B cell (primary cell): ENCODE measurements at regions of chr20 and their contacts with region 1.

Region 1: DNA sequence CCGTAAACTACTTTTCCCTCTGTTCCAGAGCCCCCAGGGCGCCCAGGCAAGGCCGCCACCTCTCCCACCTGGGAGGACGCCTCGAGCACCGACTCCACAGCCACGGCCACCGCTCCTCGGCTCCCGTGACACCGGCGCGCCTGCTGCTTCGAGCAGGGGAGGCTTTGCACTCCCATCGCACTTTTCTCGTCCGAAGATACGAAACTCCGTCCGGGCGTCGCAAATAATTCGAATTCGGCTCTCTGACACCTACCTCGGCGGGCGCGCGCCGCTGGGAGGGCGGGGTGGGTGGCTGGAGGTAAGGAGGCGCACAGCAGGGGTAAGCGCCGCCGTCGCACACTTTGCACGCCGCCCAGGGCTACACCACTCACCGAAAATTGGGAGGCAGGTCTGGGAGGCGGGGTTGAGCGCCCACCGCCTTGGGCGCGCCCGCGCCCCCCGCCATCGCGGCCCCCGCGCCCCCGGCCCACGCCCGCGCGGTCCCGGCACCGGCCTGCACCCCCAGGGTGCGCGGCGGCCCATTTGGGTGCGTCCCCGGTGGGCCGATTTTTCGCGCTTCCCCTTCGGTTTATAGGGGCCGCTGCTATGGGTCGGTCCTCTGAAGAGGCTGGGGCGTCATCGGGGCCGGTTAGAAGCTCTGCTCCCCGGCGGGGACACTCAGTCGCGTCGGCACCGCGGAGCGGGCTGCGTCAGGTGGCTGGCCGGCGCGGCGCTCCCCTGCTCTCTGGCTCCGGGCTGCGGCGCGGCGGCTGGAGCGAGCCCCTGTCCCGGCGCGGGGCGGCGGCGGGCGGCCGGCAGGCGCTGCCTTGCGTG is 36.2 kb downstream of the GNAS start:
- DNase-seq: peak; percentile 93
- ATAC-seq: peak; percentile 42
- H3K4me3 ChIP-seq: peak overlapping the region; percentile 26 to 90 (median 71)
- H3K4me3 Mint-ChIP-seq: peak overlapping the region; percentile 85
- H3K27ac ChIP-seq: peak overlapping the region; percentile 64 to 88
- H3K27ac Mint-ChIP-seq: peak overlapping the region; percentile 88
- H3K4me1 ChIP-seq: peaks cover 25 to 30% of the 10 kb centered on the region in 2 donors
- H3K4me1 Mint-ChIP-seq: peaks cover 29% of the 10 kb centered on the region
- H3K27me3 ChIP-seq: no peaks in the 10 kb centered on the region
- H3K27me3 Mint-ChIP-seq: no peaks in the 10 kb centered on the region
- CTCF ChIP-seq: no peak

Region 2: DNA sequence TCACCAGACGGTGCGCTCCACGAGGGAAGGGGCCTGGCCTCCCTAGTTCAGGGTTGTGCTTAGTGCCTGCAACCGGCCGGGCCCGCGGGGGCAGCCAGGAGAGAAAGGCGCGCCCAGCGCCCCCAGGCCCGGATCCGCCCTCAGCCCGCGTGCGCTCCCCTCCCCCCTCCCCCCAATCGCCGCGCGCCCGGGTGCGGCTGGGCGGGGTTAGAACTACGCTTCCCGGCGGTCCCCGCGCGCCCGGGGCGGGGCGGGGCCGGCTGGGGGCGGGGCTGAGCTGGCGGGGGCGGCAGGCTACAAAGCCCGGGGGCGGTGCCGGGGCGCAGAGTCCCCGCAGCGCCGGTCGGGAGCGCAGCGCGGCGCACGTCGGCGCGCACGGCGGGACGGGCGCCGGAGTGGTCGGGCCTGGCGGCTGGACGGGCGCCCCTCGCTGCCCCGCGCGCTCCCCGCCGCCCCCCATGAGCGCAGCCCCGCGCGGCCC is 1497.6 kb before region 1 on chr20 and contains the start of gene RBM38:
- CTCF ChIA-PET with region 1: no interaction called
- POLR2A ChIA-PET with region 1: no interaction called
- intact Hi-C with region 1: loop called (anchors 5 kb)
- DNase-seq: peak; percentile 91
- ATAC-seq: peak; percentile 66
- H3K4me3 ChIP-seq: peak within 1 kb of the TSS; percentile 82 to 99 (median 91)
- H3K4me3 Mint-ChIP-seq: peak within 1 kb of the TSS; percentile 98
- H3K27ac ChIP-seq: peak within 1 kb of the TSS; percentile 96 to 98
- H3K27ac Mint-ChIP-seq: peak within 1 kb of the TSS; percentile 98
- H3K4me1 ChIP-seq: peaks cover 54 to 66% of the 10 kb centered on the region in 2 donors
- H3K4me1 Mint-ChIP-seq: peaks cover 51% of the 10 kb centered on the region
- H3K27me3 ChIP-seq: no peaks in the 10 kb centered on the region
- H3K27me3 Mint-ChIP-seq: no peaks in the 10 kb centered on the region
- CTCF ChIP-seq: no peak
- total RNA-seq, gene RBM38: 224 and 225 TPM in 2 replicates

Region 3: GRCh38 chr20:58650776-58651558 is 237.8 kb before region 1 on chr20 and contains the start of gene STX16:
- CTCF ChIA-PET with region 1: no interaction called
- POLR2A ChIA-PET with region 1: no interaction called
- intact Hi-C with region 1: loop called (anchors 5 kb)
- DNase-seq: peak; percentile 91
- ATAC-seq: peak; percentile 74
- H3K4me3 ChIP-seq: peak within 1 kb of the TSS; percentile 87 to 99 (median 94)
- H3K4me3 Mint-ChIP-seq: peak within 1 kb of the TSS; percentile 100
- H3K27ac ChIP-seq: peak within 1 kb of the TSS; percentile 84 to 95
- H3K27ac Mint-ChIP-seq: peak within 1 kb of the TSS; percentile 97
- H3K4me1 ChIP-seq: peaks cover 14 to 20% of the 10 kb centered on the region in 2 donors
- H3K4me1 Mint-ChIP-seq: peaks cover 23% of the 10 kb centered on the region
- H3K27me3 ChIP-seq: peaks cover 0 to 3% (median 0%) of the 10 kb centered on the region in 4 experiments
- H3K27me3 Mint-ChIP-seq: no peaks in the 10 kb centered on the region
- CTCF ChIP-seq: peak; percentile 75
- total RNA-seq, gene STX16: 106 and 117 TPM in 2 replicates

Region 4: DNA sequence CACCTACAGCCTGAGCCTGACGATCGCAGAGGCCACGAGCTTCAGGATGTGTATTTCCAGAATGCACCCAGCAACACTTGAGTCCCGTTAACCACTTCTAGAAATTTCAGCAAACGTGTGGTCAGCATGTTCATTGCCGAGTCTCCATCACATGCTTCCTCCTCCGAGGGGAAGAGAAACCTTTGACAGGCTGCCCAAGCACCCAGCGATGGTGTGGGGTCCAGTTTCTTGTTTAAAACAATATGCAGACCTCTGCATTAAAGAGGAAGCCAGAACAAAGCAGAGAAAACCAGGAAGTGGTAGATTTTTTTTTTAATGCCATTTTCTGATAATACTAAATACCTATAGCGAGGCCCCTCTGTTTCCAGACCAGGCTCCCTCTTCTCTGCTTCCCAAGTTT is 110.0 kb before region 1 on chr20:
- CTCF ChIA-PET with region 1: no interaction called
- POLR2A ChIA-PET with region 1: no interaction called
- intact Hi-C with region 1: no loop called
- DNase-seq: no peak
- ATAC-seq: no peak
- H3K4me3 ChIP-seq: no peak overlapping the region
- H3K4me3 Mint-ChIP-seq: no peak overlapping the region
- H3K27ac ChIP-seq: no peak overlapping the region
- H3K27ac Mint-ChIP-seq: no peak overlapping the region
- H3K4me1 ChIP-seq: no peaks in the 10 kb centered on the region
- H3K4me1 Mint-ChIP-seq: no peaks in the 10 kb centered on the region
- H3K27me3 ChIP-seq: peaks cover 0 to 4% (median 0%) of the 10 kb centered on the region in 4 experiments
- H3K27me3 Mint-ChIP-seq: peaks cover 29% of the 10 kb centered on the region
- CTCF ChIP-seq: no peak

Region 5: GRCh38 chr20:58907399-58908137 is 18.8 kb after region 1 on chr20:
- CTCF ChIA-PET with region 1: interaction called, 4 read pairs
- POLR2A ChIA-PET with region 1: interaction called, 7 read pairs
- intact Hi-C with region 1: loop called (anchors 1 kb)
- DNase-seq: peak; percentile 95
- ATAC-seq: peak; percentile 84
- H3K4me3 ChIP-seq: peak overlapping the region; percentile 24 to 54 (median 33)
- H3K4me3 Mint-ChIP-seq: peak overlapping the region; percentile 85
- H3K27ac ChIP-seq: peak overlapping the region; percentile 94 to 97
- H3K27ac Mint-ChIP-seq: peak overlapping the region; percentile 94
- H3K4me1 ChIP-seq: peaks cover 24 to 37% of the 10 kb centered on the region in 2 donors
- H3K4me1 Mint-ChIP-seq: peaks cover 59% of the 10 kb centered on the region
- H3K27me3 ChIP-seq: no peaks in the 10 kb centered on the region
- H3K27me3 Mint-ChIP-seq: no peaks in the 10 kb centered on the region
- CTCF ChIP-seq: no peak

Region 6: DNA sequence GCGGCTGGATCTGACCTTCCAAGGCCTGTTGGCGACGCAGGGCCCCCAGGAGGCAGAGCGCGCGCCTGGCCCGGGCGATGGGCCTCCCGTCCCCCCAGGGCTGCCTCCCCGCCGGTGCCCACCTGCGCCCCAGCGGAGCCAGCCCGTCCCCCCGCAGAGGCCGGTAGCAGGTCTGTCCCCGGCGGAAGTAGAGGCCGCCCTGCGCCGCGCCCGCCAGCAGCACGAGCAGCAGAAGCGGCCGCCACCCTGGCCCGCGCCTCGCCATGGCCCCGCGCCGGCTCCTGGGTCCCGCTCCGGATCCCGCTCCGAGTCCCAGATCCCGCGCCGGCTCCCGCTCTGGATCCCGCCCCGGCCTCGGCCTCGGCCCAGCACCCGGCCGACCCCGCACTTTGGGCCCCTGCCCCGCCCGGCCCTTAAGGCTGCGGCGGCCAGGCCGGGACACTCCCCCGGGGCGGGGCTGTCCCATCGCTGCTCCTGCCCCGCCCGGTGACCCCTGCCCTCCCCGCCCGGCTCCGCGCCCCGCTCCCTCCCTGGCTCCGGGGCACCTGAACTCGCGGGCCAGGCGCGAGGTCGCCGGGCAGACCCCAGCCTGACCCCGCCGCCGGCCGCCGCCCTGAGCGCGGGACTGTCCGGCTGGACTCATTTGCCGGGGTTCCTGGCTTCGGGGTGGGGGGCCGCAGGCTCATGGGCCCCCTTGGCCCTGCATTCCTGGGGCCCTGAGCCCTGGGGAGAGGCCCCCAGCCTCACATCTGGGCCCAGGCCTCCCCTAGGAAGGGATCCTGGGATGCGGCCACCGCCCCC is 118.3 kb after region 1 on chr20 and contains the start of gene CTSZ:
- CTCF ChIA-PET with region 1: no interaction called
- POLR2A ChIA-PET with region 1: interaction called, 6 read pairs
- intact Hi-C with region 1: loop called (anchors 1 kb)
- DNase-seq: peak; percentile 60
- ATAC-seq: peak; percentile 23
- H3K4me3 ChIP-seq: peak within 1 kb of the TSS; percentile 79 to 91 (median 88)
- H3K4me3 Mint-ChIP-seq: peak within 1 kb of the TSS; percentile 98
- H3K27ac ChIP-seq: peak within 1 kb of the TSS; percentile 97
- H3K27ac Mint-ChIP-seq: peak within 1 kb of the TSS; percentile 99
- H3K4me1 ChIP-seq: peaks cover 45 to 65% of the 10 kb centered on the region in 2 donors
- H3K4me1 Mint-ChIP-seq: peaks cover 71% of the 10 kb centered on the region
- H3K27me3 ChIP-seq: no peaks in the 10 kb centered on the region
- H3K27me3 Mint-ChIP-seq: no peaks in the 10 kb centered on the region
- CTCF ChIP-seq: no peak
- total RNA-seq, gene CTSZ: 319 and 322 TPM in 2 replicates

Region 7: DNA sequence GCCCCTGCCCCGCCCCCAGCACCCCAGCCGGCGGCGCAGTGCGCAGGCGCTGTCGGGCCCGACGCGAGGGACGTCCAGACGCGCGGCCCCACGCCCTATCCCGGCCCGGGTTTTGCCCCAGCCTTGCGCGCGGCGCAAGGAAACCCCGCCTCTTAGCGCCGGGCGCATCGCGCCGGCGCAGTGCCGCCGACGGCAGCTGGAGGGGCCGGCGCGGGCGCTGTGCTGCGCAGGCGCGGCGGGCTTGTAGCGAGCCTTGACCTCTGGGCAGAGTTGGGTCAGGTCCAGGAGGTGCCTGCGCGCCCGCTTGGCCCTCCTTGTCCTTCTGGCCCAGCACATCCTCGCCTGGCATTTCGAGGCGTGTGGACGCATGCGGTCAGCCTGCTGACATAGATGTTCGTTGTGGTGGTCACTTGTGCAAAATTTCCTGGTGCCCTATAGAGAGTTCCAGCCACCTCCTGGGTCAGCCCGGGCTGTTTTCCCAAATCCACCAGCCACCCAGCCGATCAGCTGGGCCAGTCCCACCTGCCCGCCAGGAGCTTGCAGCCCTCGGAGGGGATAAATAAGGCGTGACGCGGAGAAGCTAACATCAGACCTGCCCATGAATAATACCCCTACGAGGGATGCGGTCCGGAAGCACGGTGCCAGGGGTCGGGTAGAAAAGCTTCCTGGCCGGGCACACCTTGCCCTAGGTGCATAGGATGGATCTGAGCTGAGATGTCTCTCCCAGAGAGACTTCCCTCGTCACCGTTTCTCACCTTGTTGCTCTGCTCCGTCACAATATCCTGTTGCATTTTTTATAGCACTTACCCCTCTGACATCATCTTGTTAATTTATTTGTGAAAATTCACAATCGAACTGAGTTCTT is 154.3 kb after region 1 on chr20:
- CTCF ChIA-PET with region 1: no interaction called
- POLR2A ChIA-PET with region 1: interaction called, 4 read pairs
- intact Hi-C with region 1: loop called (anchors 1 kb)
- DNase-seq: peak; percentile 96
- ATAC-seq: peak; percentile 98
- H3K4me3 ChIP-seq: peak overlapping the region in 4 of 5 experiments; percentile 80 to 97 (median 86)
- H3K4me3 Mint-ChIP-seq: peak overlapping the region; percentile 94
- H3K27ac ChIP-seq: peak overlapping the region; percentile 69 to 89
- H3K27ac Mint-ChIP-seq: peak overlapping the region; percentile 93
- H3K4me1 ChIP-seq: peaks cover 45 to 47% of the 10 kb centered on the region in 2 donors
- H3K4me1 Mint-ChIP-seq: peaks cover 51% of the 10 kb centered on the region
- H3K27me3 ChIP-seq: no peaks in the 10 kb centered on the region
- H3K27me3 Mint-ChIP-seq: no peaks in the 10 kb centered on the region
- CTCF ChIP-seq: no peak

Region 8: GRCh38 chr20:59159493-59160376 is 271.0 kb after region 1 on chr20:
- CTCF ChIA-PET with region 1: no interaction called
- POLR2A ChIA-PET with region 1: no interaction called
- intact Hi-C with region 1: loop called (anchors 5 kb)
- DNase-seq: peak; percentile 57
- ATAC-seq: peak; percentile 34
- H3K4me3 ChIP-seq: peak overlapping the region in 2 of 5 experiments; percentile 19 to 30
- H3K4me3 Mint-ChIP-seq: peak overlapping the region; percentile 66
- H3K27ac ChIP-seq: no peak overlapping the region
- H3K27ac Mint-ChIP-seq: peak overlapping the region; percentile 59
- H3K4me1 ChIP-seq: peaks cover 51 to 53% of the 10 kb centered on the region in 2 donors
- H3K4me1 Mint-ChIP-seq: peaks cover 58% of the 10 kb centered on the region
- H3K27me3 ChIP-seq: no peaks in the 10 kb centered on the region
- H3K27me3 Mint-ChIP-seq: peaks cover 3% of the 10 kb centered on the region
- CTCF ChIP-seq: no peak